Activated naive CD4-positive, alpha-beta T cell treated with anti-CD3 and anti-CD28 coated beads for 36 hours (primary cell): ENCODE measurements at regions of chr9 and their contacts with region 1.

Region 1: DNA sequence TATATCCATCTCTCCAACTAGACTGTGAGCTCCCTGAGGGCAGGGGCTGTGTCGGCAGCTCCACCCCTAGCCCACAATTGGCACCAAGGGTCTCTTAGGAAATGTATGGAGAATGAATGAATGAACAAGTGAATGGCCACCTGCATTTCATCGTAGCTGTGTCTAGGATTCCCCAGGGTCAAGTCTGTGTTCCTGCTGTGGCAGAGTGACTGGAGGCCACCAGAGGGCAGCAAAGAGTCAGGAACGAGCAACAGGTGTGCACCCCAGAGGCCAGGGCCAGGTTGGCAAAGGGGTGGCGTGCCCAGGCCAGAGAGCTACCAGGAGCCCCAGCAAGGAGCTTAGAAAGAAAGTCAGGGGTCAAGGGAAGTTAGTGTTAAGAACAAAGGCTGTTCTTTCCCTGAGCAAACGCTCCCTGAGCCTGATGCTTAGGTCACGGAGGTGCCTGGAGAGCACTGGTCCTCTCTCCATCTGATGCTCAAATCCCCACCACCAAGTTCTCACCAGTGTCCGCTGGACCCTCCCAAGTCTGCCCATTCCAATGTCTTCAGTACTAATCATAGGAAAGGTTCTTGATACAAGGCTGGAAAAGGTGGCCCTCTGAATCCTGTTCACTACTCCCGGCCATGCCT is 160.7 kb downstream of the PAX5 start:
- DNase-seq: peak; percentile 84
- H3K4me3 Mint-ChIP-seq: no peak overlapping the region
- H3K27ac Mint-ChIP-seq: no peak overlapping the region
- H3K4me1 Mint-ChIP-seq: no peaks in the 10 kb centered on the region
- H3K27me3 Mint-ChIP-seq: no peaks in the 10 kb centered on the region

Region 2: GRCh38 chr9:36846621-36847020 is 26.7 kb before region 1 on chr9:
- CTCF ChIA-PET with region 1: no interaction called
- intact Hi-C with region 1: no loop called
- DNase-seq: no peak
- H3K4me3 Mint-ChIP-seq: no peak overlapping the region
- H3K27ac Mint-ChIP-seq: no peak overlapping the region
- H3K4me1 Mint-ChIP-seq: no peaks in the 10 kb centered on the region
- H3K27me3 Mint-ChIP-seq: no peaks in the 10 kb centered on the region

Region 3: GRCh38 chr9:36884721-36885120 is 11.4 kb after region 1 on chr9:
- CTCF ChIA-PET with region 1: interaction called, 15 read pairs
- intact Hi-C with region 1: no loop called
- DNase-seq: no peak
- H3K4me3 Mint-ChIP-seq: no peak overlapping the region
- H3K27ac Mint-ChIP-seq: no peak overlapping the region
- H3K4me1 Mint-ChIP-seq: no peaks in the 10 kb centered on the region
- H3K27me3 Mint-ChIP-seq: peaks cover 3% of the 10 kb centered on the region

Region 4: DNA sequence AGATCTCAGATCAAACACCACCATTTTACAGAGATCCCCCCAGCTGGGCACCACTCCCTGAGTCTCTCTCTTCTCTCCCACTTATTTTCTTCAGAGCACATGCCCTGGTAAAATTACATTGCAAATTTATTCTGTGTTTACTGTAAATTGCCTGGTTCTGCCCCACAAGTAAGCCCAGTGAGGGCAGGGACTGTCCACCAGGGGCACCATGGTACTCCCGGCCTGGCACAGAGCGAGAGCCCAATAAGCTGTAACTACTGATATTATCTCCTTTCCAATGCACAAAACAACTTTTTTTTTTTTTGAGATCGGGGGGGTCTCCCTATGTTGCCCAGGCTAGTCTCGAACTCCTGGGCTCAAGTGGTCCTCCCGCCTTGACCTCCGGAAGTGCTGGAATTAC is 37.7 kb after region 1 on chr9:
- CTCF ChIA-PET with region 1: interaction called, 10 read pairs
- intact Hi-C with region 1: no loop called
- DNase-seq: no peak
- H3K4me3 Mint-ChIP-seq: no peak overlapping the region
- H3K27ac Mint-ChIP-seq: no peak overlapping the region
- H3K4me1 Mint-ChIP-seq: no peaks in the 10 kb centered on the region
- H3K27me3 Mint-ChIP-seq: peaks cover 28% of the 10 kb centered on the region

Region 5: GRCh38 chr9:36974731-36975130 is 101.4 kb after region 1 on chr9:
- CTCF ChIA-PET with region 1: interaction called, 18 read pairs
- intact Hi-C with region 1: loop called (anchors 1 kb)
- DNase-seq: peak; percentile 33
- H3K4me3 Mint-ChIP-seq: no peak overlapping the region
- H3K27ac Mint-ChIP-seq: no peak overlapping the region
- H3K4me1 Mint-ChIP-seq: peaks cover 3% of the 10 kb centered on the region
- H3K27me3 Mint-ChIP-seq: peaks cover 8% of the 10 kb centered on the region

Region 6: GRCh38 chr9:37329576-37329975 is 456.2 kb after region 1 on chr9:
- CTCF ChIA-PET with region 1: no interaction called
- intact Hi-C with region 1: loop called (anchors 5 kb)
- DNase-seq: peak; percentile 16
- H3K4me3 Mint-ChIP-seq: no peak overlapping the region
- H3K27ac Mint-ChIP-seq: no peak overlapping the region
- H3K4me1 Mint-ChIP-seq: peaks cover 7% of the 10 kb centered on the region
- H3K27me3 Mint-ChIP-seq: no peaks in the 10 kb centered on the region

Region 7: GRCh38 chr9:37592108-37592951 is 719.0 kb after region 1 on chr9 and contains the start of gene TOMM5:
- CTCF ChIA-PET with region 1: no interaction called
- intact Hi-C with region 1: loop called (anchors 5 kb)
- DNase-seq: peak; percentile 96
- H3K4me3 Mint-ChIP-seq: peak within 1 kb of the TSS; percentile 92
- H3K27ac Mint-ChIP-seq: peak within 1 kb of the TSS; percentile 93
- H3K4me1 Mint-ChIP-seq: peaks cover 37% of the 10 kb centered on the region
- H3K27me3 Mint-ChIP-seq: peaks cover 3% of the 10 kb centered on the region
- total RNA-seq, gene TOMM5: 136 to 140 TPM